Posterior vena cava (tissue), 2 donors: ENCODE measurements at regions of chr10 and their contacts with region 1.

Region 1: DNA sequence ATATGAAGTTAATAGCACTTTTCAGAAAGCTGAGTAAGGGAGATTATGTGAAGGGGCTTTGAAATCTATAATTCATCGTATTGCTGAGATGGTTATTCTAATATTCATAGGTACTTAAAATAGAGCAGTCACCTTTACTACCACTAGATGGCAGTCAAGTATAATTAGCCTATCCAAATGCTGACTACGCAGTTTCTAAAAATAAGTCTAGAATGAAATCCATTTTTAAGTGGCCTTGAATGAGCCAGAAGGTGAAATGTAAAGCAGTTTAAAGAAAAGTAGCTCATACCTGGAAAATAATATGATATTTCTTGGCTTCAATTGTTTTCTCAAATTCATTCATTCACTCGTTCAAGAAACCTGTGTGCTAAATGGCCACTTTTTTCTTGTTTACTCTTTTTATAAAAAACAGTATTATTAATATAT is 1277.1 kb downstream of the GATA3 start:
- DNase-seq: no peak

Region 2: GRCh38 chr10:10677479-10677878 is 1345.9 kb after region 1 on chr10:
- intact Hi-C with region 1: loop called in 1 of 2 experiments (anchors 5 kb)
- DNase-seq: peak; percentile 82